Activated CD8-positive, alpha-beta T cell treated with anti-CD3 and anti-CD28 coated beads for 36 hours (primary cell): ENCODE measurements at regions of chr2 and their contacts with region 1.

Region 1: DNA sequence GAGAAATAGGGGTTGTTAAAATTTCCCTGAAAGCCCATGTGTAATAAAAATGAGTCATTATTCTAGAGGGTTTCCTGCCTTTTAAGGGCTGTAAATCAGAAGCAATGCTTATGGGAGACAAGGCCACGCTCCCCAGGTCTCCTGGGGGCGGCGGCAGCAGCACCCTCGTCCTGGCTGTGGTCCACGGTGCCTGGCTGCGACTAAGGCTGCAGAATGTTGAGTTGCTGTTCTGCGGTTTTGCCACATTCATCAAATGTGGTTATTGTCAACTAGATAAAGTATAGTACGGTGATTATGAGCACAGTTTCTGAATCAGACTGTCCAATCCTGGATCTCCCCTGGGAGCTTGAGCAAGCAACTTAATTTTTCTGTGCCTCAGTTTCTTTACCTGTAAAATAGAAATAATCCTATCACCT is 11.9 kb upstream of the AGFG1 start:
- DNase-seq: peak; percentile 89
- ATAC-seq: peak; percentile 59
- H3K4me3 Mint-ChIP-seq: peak overlapping the region; percentile 59
- H3K27ac Mint-ChIP-seq: peak overlapping the region; percentile 89
- H3K4me1 Mint-ChIP-seq: peaks cover 84% of the 10 kb centered on the region
- H3K27me3 Mint-ChIP-seq: no peaks in the 10 kb centered on the region
- CTCF ChIP-seq: no peak

Region 2: DNA sequence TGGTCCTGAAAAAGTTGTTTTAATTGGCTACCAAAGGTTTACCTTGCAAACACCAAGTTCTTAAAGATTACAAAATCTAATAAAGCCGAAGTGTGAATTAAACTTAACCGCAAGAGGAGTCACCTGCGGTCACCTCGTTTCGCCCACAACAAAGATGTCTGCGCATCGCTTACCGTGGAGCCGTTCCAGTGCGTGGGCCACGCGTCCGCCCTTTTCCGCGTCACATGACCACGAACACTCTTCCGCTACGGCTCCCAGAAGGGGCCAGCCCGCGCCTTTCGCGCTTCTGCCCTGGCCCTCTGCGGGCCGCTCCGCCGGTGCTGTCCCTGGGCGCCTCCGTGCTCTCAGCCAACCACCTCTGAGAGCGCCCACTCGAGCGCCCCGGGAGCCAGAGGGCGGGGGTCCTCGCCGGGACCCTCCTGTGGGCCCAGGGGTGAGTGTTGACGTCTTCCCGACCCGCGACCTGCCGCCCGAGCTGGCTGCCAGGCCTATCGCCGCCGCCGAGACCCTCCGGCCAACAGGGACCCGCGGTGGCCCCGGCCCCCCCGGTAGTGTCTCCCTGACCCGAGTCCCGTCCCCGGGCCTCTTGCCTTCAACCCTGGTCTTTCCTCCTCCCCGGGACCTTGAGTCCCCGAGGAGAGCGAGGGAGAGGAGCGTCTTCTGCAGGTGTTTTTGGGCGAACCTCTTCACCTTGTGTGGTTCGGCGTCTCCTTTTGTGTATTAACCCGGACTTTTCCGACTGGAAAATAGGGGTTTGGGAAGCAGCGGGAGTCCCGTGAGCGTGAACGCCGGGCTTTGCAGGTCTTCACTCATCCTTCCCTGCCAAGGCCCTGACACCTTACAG is 134.9 kb before region 1 on chr2 and contains the start of gene MFF:
- CTCF ChIA-PET with region 1: no interaction called
- POLR2A ChIA-PET with region 1: interaction called, 3 read pairs
- intact Hi-C with region 1: loop called (anchors 5 kb)
- DNase-seq: peak; percentile 98
- ATAC-seq: peak; percentile 95
- H3K4me3 Mint-ChIP-seq: peak within 1 kb of the TSS; percentile 90
- H3K27ac Mint-ChIP-seq: peak within 1 kb of the TSS; percentile 95
- H3K4me1 Mint-ChIP-seq: peaks cover 29% of the 10 kb centered on the region
- H3K27me3 Mint-ChIP-seq: no peaks in the 10 kb centered on the region
- CTCF ChIP-seq: peak; percentile 40
- total RNA-seq, gene MFF: 66.5 to 73.9 TPM

Region 3: DNA sequence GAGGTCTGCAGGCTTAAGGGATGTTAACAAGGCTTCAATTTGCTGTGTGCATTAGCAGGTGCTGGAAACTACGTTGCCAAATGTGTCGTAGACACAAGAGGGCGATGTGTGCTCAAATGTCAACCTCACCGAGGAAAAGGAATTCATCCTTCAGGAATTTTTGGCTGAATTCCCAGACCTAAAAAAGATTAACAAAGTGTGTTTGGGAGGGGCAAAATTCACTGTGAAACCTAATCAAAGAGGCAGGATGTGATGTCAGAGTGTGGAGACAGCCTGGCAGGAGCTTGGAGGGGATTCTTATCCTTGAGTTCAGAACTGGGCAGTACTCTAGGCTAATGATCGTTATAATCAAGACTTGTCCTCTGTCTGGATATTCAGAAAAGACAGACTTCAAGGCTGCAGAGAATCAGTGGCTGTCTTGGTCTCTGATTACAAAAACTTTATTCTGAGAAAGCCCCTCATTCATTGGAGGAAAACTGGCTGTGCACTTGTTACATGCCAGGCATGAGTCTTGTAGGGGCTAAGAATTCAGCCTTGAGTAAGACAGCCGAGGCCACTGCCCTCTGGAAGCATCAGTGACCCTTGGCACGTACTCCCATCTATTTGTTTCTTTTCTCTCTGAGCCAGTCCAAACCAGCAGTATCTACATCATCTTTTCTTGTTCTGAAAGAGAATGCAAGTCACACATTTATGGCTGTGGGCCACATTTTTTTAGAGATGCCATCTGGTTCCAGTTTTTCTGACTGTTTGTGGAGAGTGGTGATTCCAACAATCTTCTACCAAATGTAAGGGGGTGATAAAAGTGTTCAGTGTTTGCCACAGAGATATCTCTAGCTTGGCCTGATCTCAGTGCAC is 53.7 kb before region 1 on chr2:
- CTCF ChIA-PET with region 1: interaction called, 10 read pairs
- POLR2A ChIA-PET with region 1: interaction called, 13 read pairs
- intact Hi-C with region 1: loop called (anchors 1 kb)
- DNase-seq: peak; percentile 37
- ATAC-seq: no peak
- H3K4me3 Mint-ChIP-seq: no peak overlapping the region
- H3K27ac Mint-ChIP-seq: no peak overlapping the region
- H3K4me1 Mint-ChIP-seq: peaks cover 50% of the 10 kb centered on the region
- H3K27me3 Mint-ChIP-seq: no peaks in the 10 kb centered on the region
- CTCF ChIP-seq: peak; percentile 70

Region 4: DNA sequence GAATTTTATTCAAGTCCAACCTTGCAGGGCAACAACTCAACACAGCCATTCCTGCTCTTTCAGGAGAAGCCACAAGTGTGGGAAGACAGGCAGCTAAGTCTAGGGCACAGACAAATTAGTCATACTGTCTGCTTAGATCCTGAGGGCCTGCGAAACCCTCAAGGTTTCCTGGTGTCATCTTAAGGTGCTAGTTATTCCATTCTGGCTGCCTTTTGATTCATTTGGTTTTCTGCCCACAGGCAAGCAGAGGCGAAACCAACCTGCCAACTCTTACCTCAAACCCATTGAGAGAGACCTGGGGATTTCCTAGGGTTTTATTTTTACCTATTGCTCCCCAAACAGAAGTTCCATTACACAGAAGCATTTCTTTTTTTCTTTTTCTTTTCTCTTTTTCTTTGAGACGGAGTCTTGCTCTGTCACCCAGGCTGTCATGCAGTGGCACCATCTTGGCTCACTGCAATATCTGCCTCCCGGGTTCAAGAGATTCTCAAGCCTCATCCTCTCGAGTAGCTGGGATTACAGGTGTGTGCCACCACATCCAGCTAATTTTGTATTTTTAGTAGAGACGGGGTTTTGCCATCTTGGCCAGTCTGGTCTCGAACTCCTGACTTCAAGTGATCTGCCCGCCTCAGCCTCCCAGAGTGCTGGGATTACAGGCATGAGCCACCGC is 48.6 kb before region 1 on chr2:
- CTCF ChIA-PET with region 1: interaction called, 8 read pairs
- POLR2A ChIA-PET with region 1: interaction called, 13 read pairs
- intact Hi-C with region 1: loop called (anchors 1 kb)
- DNase-seq: peak; percentile 82
- ATAC-seq: peak; percentile 84
- H3K4me3 Mint-ChIP-seq: peak overlapping the region; percentile 40
- H3K27ac Mint-ChIP-seq: peak overlapping the region; percentile 90
- H3K4me1 Mint-ChIP-seq: peaks cover 64% of the 10 kb centered on the region
- H3K27me3 Mint-ChIP-seq: no peaks in the 10 kb centered on the region
- CTCF ChIP-seq: no peak

Region 5: DNA sequence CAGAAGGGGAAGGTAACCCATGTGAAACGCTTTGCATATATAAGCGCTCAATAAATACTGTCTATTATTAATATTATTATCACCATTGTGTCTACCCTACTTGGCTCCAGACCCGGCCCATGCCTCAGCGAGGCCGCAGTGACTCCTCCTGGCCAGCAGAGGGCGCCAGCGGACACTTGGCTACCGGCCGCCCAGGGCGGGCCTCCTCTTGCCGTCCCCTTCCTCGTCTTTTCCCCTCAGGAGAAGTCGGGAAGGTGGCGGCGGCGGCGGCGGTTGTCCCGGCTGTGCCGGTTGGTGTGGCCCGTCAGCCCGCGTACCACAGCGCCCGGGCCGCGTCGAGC is 11.8 kb after region 1 on chr2 and contains the start of gene AGFG1:
- CTCF ChIA-PET with region 1: interaction called, 4 read pairs
- POLR2A ChIA-PET with region 1: interaction called, 10 read pairs
- intact Hi-C with region 1: no loop called
- DNase-seq: peak; percentile 87
- ATAC-seq: peak; percentile 87
- H3K4me3 Mint-ChIP-seq: peak within 1 kb of the TSS; percentile 90
- H3K27ac Mint-ChIP-seq: peak within 1 kb of the TSS; percentile 85
- H3K4me1 Mint-ChIP-seq: peaks cover 54% of the 10 kb centered on the region
- H3K27me3 Mint-ChIP-seq: no peaks in the 10 kb centered on the region
- CTCF ChIP-seq: peak; percentile 97
- total RNA-seq, gene AGFG1: 117 to 119 TPM

Region 6: GRCh38 chr2:227479865-227480475 is 19.9 kb after region 1 on chr2:
- CTCF ChIA-PET with region 1: interaction called, 6 read pairs
- POLR2A ChIA-PET with region 1: interaction called, 15 read pairs
- intact Hi-C with region 1: no loop called
- DNase-seq: no peak
- ATAC-seq: peak; percentile 43
- H3K4me3 Mint-ChIP-seq: peak overlapping the region; percentile 28
- H3K27ac Mint-ChIP-seq: peak overlapping the region; percentile 78
- H3K4me1 Mint-ChIP-seq: peaks cover 75% of the 10 kb centered on the region
- H3K27me3 Mint-ChIP-seq: no peaks in the 10 kb centered on the region
- CTCF ChIP-seq: peak; percentile 65